HCT116 (cell line): ENCODE measurements at regions of chr6 and their contacts with region 1.

Region 1: DNA sequence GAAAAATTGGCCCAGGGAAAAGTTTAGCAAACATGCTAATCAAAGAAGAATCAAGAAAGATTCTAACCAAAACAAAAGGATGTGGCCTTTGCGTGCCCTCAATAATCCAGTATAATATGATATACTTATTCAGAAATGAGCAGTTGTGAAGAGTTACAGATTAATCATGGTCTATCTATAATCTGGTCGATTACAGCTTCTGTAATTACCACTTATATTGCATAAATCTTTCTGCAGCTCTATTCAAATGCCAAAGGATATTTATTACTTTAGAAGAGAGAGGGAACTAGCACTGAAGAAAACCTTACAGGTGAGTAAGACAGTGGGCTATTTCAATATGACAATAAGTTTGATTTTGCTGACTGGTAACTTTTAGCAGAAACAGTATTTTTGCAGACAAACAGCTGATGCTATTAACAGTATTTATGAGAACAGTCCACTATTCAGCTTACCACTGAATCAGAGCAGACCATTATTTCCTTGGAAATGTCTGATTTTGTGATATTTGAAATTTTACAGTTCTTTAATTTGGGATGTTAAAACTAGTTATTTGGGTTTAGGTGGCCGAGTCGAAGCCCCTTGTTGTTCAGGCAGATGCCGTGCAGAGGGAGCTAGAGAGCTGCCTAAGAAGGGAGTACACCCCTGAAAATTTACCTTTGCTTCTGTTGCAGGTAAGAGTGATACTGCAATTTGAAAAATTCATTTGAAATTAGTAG is 92.2 kb downstream of the CEP57L1 start:
- DNase-seq: peak; percentile 56
- ATAC-seq: peak; percentile 96
- H3K4me3 ChIP-seq: no peak overlapping the region
- H3K27ac ChIP-seq: no peak overlapping the region
- H3K4me1 ChIP-seq: no peaks in the 10 kb centered on the region
- H3K27me3 ChIP-seq: peaks cover 26% of the 10 kb centered on the region
- CTCF ChIP-seq: peak; percentile 91 to 97 (median 92)
- POLR2A ChIP-seq: no peak
- RAD21 ChIP-seq: peak; percentile 97

Region 2: DNA sequence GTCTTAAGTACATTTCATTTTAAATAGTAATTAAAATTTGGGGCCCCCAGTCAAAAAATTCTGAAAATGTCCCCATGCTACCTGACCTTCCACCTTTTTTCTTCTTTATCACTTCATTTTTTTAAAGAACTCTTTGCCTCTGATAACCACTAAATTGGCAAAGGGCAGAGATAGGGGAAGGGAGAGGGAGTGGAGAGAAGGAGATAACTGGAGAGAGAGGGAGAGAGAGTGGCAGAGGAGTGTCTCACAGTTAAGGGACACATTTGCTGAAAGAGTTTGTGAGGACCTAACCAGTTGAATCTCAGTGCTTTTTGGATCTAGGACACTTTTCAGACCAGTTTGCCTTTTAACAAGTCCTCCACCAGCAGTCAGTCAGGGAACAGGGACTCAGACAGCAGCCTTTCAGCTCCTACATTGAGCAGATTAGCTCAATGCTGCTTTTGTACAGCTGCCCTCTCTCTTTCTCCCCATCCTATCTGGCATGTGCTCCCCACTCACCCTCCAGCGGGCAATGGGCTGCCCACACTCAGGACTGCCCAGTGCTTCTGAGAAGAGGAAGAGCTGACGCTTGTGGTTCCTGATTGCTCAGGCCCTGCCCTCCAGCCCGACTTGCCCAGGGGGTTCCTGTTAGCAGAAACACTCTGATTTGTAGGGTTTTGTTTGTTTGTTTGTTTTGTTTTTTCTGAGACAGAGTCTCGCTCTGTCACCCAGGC is 324.9 kb before region 1 on chr6:
- CTCF ChIA-PET with region 1: no interaction called
- POLR2A ChIA-PET with region 1: no interaction called
- RAD21 ChIA-PET with region 1: no interaction called
- intact Hi-C with region 1: no loop called
- DNase-seq: no peak
- ATAC-seq: no peak
- H3K4me3 ChIP-seq: no peak overlapping the region
- H3K27ac ChIP-seq: no peak overlapping the region
- H3K4me1 ChIP-seq: no peaks in the 10 kb centered on the region
- H3K27me3 ChIP-seq: no peaks in the 10 kb centered on the region
- CTCF ChIP-seq: no peak
- POLR2A ChIP-seq: no peak
- RAD21 ChIP-seq: no peak

Region 3: GRCh38 chr6:108961985-108962384 is 225.6 kb before region 1 on chr6:
- CTCF ChIA-PET with region 1: no interaction called
- POLR2A ChIA-PET with region 1: no interaction called
- RAD21 ChIA-PET with region 1: no interaction called
- intact Hi-C with region 1: no loop called
- DNase-seq: no peak
- ATAC-seq: no peak
- H3K4me3 ChIP-seq: no peak overlapping the region
- H3K27ac ChIP-seq: no peak overlapping the region
- H3K4me1 ChIP-seq: peaks cover 5 to 8% of the 10 kb centered on the region in 2 experiments; a peak in 2 of 4 replicates
- H3K27me3 ChIP-seq: no peaks in the 10 kb centered on the region
- CTCF ChIP-seq: no peak
- POLR2A ChIP-seq: no peak
- RAD21 ChIP-seq: no peak

Region 4: DNA sequence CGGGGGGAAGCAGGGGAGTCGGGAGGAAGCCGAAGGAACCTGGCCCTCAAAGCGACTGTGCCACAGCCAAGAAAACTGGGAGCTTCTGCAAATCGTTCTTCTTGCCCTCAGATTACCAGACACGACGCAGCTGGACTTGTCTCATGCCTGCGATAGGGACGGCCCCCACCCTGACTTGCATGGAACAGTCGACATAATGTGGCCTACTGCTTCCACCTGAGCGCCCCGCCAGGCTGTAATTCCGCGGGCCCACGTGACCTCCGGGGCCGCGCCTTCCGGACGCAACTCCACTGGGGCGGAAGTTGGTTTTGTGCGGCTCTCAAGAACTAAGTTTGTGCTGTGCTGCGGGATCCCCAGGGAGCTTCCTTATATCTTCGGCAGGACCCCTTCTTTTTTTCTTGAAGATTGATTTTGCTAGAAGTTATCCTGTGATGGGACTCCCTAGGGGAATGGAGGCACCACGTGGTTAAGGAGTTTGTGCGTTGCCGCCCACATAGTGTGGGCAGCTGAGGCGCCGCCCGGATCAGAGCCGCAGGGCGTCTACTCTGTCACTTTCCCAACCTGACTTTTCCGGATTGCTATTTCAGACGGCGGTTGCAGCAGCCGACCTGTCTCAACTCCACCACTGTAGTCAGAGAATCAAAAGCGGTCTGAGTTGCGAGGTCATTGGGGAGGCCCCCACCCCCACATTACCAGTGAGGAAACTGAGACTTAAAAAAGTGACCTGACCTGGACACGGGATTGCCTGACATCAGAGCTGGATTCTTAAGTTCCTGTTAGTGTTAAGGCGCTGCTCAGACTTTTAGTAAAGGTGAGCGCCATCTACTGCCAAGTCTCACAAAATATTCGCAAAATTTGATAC is 195.2 kb after region 1 on chr6:
- CTCF ChIA-PET with region 1: interaction called, 56 read pairs
- POLR2A ChIA-PET with region 1: interaction called, 4 read pairs
- RAD21 ChIA-PET with region 1: interaction called, 5 to 16 read pairs
- intact Hi-C with region 1: loop called (anchors 1 kb)
- DNase-seq: peak; percentile 89
- ATAC-seq: peak; percentile 84
- H3K4me3 ChIP-seq: peak overlapping the region; percentile 75 to 80
- H3K27ac ChIP-seq: peak overlapping the region; percentile 92
- H3K4me1 ChIP-seq: peaks cover 4 to 27% of the 10 kb centered on the region in 2 experiments; a peak in 3 of 4 replicates
- H3K27me3 ChIP-seq: no peaks in the 10 kb centered on the region
- CTCF ChIP-seq: peak; percentile 53 to 79 (median 60); a peak in 5 of 6 replicates
- POLR2A ChIP-seq: peak; percentile 16
- RAD21 ChIP-seq: peak; percentile 87

Region 5: DNA sequence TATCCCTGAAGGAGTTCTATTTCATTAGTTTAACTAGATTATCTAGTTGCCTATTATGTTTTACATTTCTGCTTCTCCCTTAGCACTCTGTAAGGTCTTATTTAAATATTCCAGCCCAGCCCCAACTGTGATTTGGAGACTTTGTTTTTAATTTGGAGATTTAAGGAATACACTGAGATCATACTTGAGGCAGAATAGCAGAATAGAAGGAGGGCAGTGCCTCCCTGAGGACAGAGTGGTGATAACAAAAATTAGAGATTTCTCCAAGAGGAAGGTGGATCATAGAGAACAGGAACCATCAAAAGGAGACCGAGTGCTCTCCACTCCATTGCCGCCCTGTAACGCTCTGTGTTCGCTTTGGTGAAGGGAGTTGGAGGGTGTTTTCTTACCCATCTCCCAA is 209.5 kb after region 1 on chr6:
- CTCF ChIA-PET with region 1: interaction called, 11 read pairs
- POLR2A ChIA-PET with region 1: interaction called, 3 read pairs
- RAD21 ChIA-PET with region 1: no interaction called
- intact Hi-C with region 1: no loop called
- DNase-seq: no peak
- ATAC-seq: peak; percentile 74
- H3K4me3 ChIP-seq: no peak overlapping the region
- H3K27ac ChIP-seq: no peak overlapping the region
- H3K4me1 ChIP-seq: peaks cover 0 to 18% of the 10 kb centered on the region in 2 experiments; a peak in 3 of 4 replicates
- H3K27me3 ChIP-seq: no peaks in the 10 kb centered on the region
- CTCF ChIP-seq: peak; percentile 16 to 58 (median 47); a peak in 4 of 6 replicates
- POLR2A ChIP-seq: no peak
- RAD21 ChIP-seq: peak; percentile 73

Region 6: DNA sequence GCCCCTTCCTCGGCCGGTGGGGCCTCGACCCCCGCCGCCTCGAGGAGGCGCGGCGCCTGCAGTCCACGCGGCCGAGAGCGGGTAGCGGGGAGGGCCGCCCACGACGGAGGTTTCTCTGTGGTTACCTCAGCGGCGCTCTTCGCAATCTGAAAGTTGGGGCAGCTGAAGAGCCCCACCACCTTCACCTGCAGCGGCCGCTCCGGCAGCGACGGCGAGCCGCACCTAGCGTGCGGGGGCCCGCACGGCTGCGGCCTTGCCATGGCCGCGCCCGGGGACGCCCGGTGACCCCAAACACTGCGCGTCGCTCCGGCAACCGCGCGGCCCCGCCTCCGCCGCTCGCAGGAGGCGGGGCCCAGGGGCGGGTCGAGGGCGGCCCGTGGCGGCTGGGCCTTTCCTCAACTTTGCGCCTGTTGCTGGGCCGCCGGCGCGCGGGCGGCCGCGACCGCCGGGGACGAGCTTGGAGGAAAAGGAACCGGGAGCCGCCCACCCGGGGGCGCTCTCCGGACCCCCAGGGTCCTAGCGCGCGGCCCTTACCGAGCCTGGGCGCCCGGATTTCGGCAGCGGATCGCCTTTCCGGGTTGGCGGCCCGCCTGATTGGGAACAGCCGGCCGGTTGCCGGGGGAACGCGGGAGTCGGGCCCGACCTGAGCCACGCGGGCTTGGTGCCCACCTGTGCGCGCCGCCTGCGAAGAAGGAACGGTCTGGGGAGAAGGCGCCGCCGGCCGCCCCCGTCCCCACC is 252.9 kb after region 1 on chr6 and contains the starts of genes PPIL6 and SMPD2:
- CTCF ChIA-PET with region 1: interaction called, 13 read pairs
- POLR2A ChIA-PET with region 1: no interaction called
- RAD21 ChIA-PET with region 1: no interaction called
- intact Hi-C with region 1: loop called (anchors 5 kb)
- DNase-seq: peak; percentile 70
- ATAC-seq: peak; percentile 87
- H3K4me3 ChIP-seq: peak within 1 kb of the TSS; percentile 87 to 90
- H3K27ac ChIP-seq: peak within 1 kb of the TSS; percentile 80
- H3K4me1 ChIP-seq: peaks cover 9 to 21% of the 10 kb centered on the region in 2 experiments
- H3K27me3 ChIP-seq: no peaks in the 10 kb centered on the region
- CTCF ChIP-seq: peak in 2 of 3 experiments; percentile 8 to 26; a peak in 1 of 6 replicates
- POLR2A ChIP-seq: no peak
- RAD21 ChIP-seq: peak; percentile 26; the same call in 1 of the 2 replicates
- total RNA-seq, gene PPIL6: 3.3 TPM
- total RNA-seq, gene SMPD2: 14.7 TPM

Region 7: GRCh38 chr6:109690737-109691621 is 503.4 kb after region 1 on chr6 and contains the starts of genes AK9 and FIG4:
- CTCF ChIA-PET with region 1: no interaction called
- POLR2A ChIA-PET with region 1: no interaction called
- RAD21 ChIA-PET with region 1: no interaction called
- intact Hi-C with region 1: loop called (anchors 10 kb)
- DNase-seq: peak; percentile 84
- ATAC-seq: peak; percentile 98
- H3K4me3 ChIP-seq: peak within 1 kb of the TSS; percentile 73
- H3K27ac ChIP-seq: peak within 1 kb of the TSS; percentile 43; the same call in 1 of the 2 replicates
- H3K4me1 ChIP-seq: peaks cover 3 to 28% of the 10 kb centered on the region in 2 experiments
- H3K27me3 ChIP-seq: 0 out of 2 replicates have a peak, but pooled peaks cover 7% of the 10 kb centered on the region
- CTCF ChIP-seq: no peak; a peak in 1 of 6 replicates
- POLR2A ChIP-seq: peak; percentile 53
- RAD21 ChIP-seq: no peak; the same call in 1 of the 2 replicates
- total RNA-seq, gene AK9: 3.5 TPM
- total RNA-seq, gene FIG4: 15.7 TPM

Region 8: GRCh38 chr6:110053395-110054240 is 866.1 kb after region 1 on chr6:
- CTCF ChIA-PET with region 1: no interaction called
- POLR2A ChIA-PET with region 1: no interaction called
- RAD21 ChIA-PET with region 1: no interaction called
- intact Hi-C with region 1: loop called (anchors 10 kb)
- DNase-seq: peak; percentile 40
- ATAC-seq: peak; percentile 81
- H3K4me3 ChIP-seq: no peak overlapping the region
- H3K27ac ChIP-seq: no peak overlapping the region
- H3K4me1 ChIP-seq: no peaks in the 10 kb centered on the region
- H3K27me3 ChIP-seq: peaks cover 4% of the 10 kb centered on the region; the same call in 1 of the 2 replicates
- CTCF ChIP-seq: peak; percentile 73 to 87 (median 82)
- POLR2A ChIP-seq: no peak
- RAD21 ChIP-seq: peak; percentile 86